GM12878 (cell line): ENCODE measurements at regions of chr6 and their contacts with region 1.

Region 1: DNA sequence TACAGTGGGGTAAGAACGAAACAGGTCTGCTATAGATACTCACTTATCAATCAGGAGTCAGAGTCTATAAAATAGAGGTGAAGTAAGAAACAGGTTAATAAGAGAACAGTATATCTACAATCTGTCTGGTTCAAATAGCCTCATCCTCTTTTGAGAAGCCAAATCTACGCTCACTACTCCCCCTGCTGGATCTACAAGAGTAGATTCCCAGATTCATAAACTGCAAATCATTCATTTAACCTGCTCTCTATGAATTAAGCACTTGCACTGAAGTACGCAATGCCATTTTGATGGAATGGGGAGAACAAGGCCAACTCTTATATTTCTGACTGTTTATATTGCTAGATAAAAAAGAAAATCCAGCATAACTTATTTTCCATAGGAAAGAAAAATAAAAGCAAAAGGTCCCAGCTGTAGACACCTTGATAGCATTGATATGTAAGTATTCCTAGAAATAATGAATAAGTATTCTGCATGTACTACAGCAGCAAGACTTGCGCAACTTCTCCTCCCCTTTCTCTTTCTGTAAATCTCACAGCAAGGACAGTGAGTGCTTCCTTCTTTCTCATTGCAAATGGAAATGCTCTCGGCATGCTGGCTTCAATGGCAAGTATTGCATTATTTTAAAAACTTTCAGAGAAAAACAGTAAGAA is 92.3 kb downstream of the RFX6 start:
- DNase-seq: no peak
- ATAC-seq: peak; percentile 92
- H3K4me3 ChIP-seq: no peak overlapping the region
- H3K27ac ChIP-seq: no peak overlapping the region
- H3K4me1 ChIP-seq: no peaks in the 10 kb centered on the region
- H3K27me3 ChIP-seq: no peaks in the 10 kb centered on the region
- CTCF ChIP-seq: peak; percentile 69 to 74 (median 70)
- EP300 ChIP-seq: no peak
- POLR2A ChIP-seq: no peak
- RAD21 ChIP-seq: peak; percentile 54; the same call in 1 of the 2 replicates

Region 2: DNA sequence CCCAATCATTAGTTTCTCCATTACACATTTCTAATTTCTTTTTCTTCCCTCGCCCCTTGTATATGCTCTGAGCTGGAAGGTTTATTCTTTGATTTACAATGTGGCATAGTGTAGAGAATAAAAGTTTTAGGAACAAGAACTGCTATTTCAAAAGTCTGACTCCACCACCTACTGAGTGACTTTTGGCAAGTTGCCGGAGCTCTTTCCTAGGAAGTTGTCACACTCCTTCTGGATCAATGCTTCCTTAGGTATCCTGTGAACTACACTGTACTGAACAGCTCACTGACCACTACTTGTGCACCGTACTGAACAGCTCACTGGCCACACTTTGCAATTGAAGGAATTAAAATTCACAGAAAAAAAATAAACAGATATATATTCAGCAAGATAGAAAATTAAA is 1366.9 kb before region 1 on chr6:
- CTCF ChIA-PET with region 1: no interaction called
- POLR2A ChIA-PET with region 1: no interaction called
- RAD21 ChIA-PET with region 1: no interaction called
- SMC1A ChIA-PET with region 1: no interaction called
- in situ Hi-C with region 1: no loop called
- intact Hi-C with region 1: no loop called
- DNase-seq: no peak
- ATAC-seq: no peak
- H3K4me3 ChIP-seq: no peak overlapping the region
- H3K27ac ChIP-seq: no peak overlapping the region
- H3K4me1 ChIP-seq: no peaks in the 10 kb centered on the region
- H3K27me3 ChIP-seq: no peaks in the 10 kb centered on the region
- CTCF ChIP-seq: no peak
- EP300 ChIP-seq: no peak
- POLR2A ChIP-seq: no peak
- RAD21 ChIP-seq: no peak

Region 3: GRCh38 chr6:116779573-116780164 is 189.7 kb before region 1 on chr6:
- CTCF ChIA-PET with region 1: interaction called, 27 read pairs
- POLR2A ChIA-PET with region 1: no interaction called
- RAD21 ChIA-PET with region 1: interaction called, 10 read pairs
- SMC1A ChIA-PET with region 1: interaction called, 12 read pairs
- in situ Hi-C with region 1: loop called (anchors 10 kb)
- intact Hi-C with region 1: loop called (anchors 1 kb)
- DNase-seq: no peak
- ATAC-seq: peak; percentile 82
- H3K4me3 ChIP-seq: no peak overlapping the region
- H3K27ac ChIP-seq: no peak overlapping the region
- H3K4me1 ChIP-seq: no peaks in the 10 kb centered on the region
- H3K27me3 ChIP-seq: no peaks in the 10 kb centered on the region
- CTCF ChIP-seq: peak; percentile 23 to 56 (median 37); a peak in 3 of 6 replicates
- EP300 ChIP-seq: no peak
- POLR2A ChIP-seq: no peak
- RAD21 ChIP-seq: peak; percentile 40; the same call in 1 of the 2 replicates

Region 4: GRCh38 chr6:116881236-116881635 is 88.1 kb before region 1 on chr6:
- CTCF ChIA-PET with region 1: interaction called, 15 read pairs
- POLR2A ChIA-PET with region 1: no interaction called
- RAD21 ChIA-PET with region 1: interaction called, 18 read pairs
- SMC1A ChIA-PET with region 1: interaction called, 14 read pairs
- in situ Hi-C with region 1: no loop called
- intact Hi-C with region 1: loop called (anchors 5 kb)
- DNase-seq: no peak
- ATAC-seq: no peak
- H3K4me3 ChIP-seq: no peak overlapping the region
- H3K27ac ChIP-seq: no peak overlapping the region
- H3K4me1 ChIP-seq: no peaks in the 10 kb centered on the region
- H3K27me3 ChIP-seq: peaks cover under 1 to 5% of the 10 kb centered on the region in 2 experiments
- CTCF ChIP-seq: no peak
- EP300 ChIP-seq: no peak
- POLR2A ChIP-seq: no peak
- RAD21 ChIP-seq: no peak

Region 5: DNA sequence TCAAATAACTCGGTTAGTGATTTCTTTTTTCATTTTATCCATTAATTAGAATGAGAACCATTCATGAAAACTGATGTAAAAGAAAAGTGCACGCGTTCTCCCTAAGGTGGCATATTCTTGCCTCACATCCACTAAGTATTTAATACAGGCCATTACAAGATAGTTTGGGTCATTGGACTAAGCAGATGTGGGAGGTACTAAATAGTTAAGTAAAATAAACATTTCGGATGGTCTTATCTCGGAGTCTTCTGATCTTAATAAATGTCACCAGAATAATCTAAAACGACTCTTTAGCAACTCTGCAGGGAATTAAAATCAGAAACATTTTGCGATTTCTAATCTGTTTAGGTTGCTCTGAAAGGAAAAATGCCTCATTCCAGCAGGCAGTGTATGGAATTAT is 13.6 kb before region 1 on chr6:
- CTCF ChIA-PET with region 1: interaction called, 7 read pairs
- POLR2A ChIA-PET with region 1: no interaction called
- RAD21 ChIA-PET with region 1: interaction called, 5 read pairs
- SMC1A ChIA-PET with region 1: interaction called, 18 read pairs
- in situ Hi-C with region 1: no loop called
- intact Hi-C with region 1: no loop called
- DNase-seq: no peak
- ATAC-seq: no peak
- H3K4me3 ChIP-seq: no peak overlapping the region
- H3K27ac ChIP-seq: no peak overlapping the region
- H3K4me1 ChIP-seq: no peaks in the 10 kb centered on the region
- H3K27me3 ChIP-seq: no peaks in the 10 kb centered on the region
- CTCF ChIP-seq: no peak
- EP300 ChIP-seq: no peak
- POLR2A ChIP-seq: no peak
- RAD21 ChIP-seq: no peak

Region 6: DNA sequence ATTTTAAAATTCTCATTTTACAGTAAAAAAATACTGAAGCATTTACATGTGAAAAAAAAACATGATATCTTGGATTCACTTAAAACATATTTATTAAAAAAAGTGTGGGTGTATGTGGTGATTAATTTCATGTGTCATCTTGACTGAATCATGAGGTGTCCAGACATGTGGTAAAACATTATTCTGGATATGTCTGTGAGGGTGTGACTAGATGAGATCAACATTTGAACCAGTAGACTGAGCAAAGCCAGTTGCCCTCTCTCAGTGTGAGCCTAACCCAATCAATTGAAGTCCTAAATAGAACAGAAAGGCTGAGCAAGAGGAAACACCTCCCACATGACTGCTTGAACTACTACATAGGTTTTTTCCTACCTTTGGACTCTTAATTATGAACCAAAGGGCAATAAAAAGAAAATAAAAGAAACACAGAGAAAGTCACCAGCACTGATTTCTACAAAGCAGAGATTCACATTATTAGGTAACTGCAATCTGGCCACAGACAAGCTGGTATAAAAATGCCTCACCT is 205.6 kb after region 1 on chr6:
- CTCF ChIA-PET with region 1: no interaction called
- POLR2A ChIA-PET with region 1: no interaction called
- RAD21 ChIA-PET with region 1: no interaction called
- SMC1A ChIA-PET with region 1: no interaction called
- in situ Hi-C with region 1: no loop called
- intact Hi-C with region 1: no loop called
- DNase-seq: no peak
- ATAC-seq: no peak
- H3K4me3 ChIP-seq: no peak overlapping the region
- H3K27ac ChIP-seq: no peak overlapping the region
- H3K4me1 ChIP-seq: no peaks in the 10 kb centered on the region
- H3K27me3 ChIP-seq: no peaks in the 10 kb centered on the region
- CTCF ChIP-seq: no peak
- EP300 ChIP-seq: no peak
- POLR2A ChIP-seq: no peak
- RAD21 ChIP-seq: no peak

Region 7: GRCh38 chr6:117188627-117189201 is 219.4 kb after region 1 on chr6:
- CTCF ChIA-PET with region 1: interaction called, 5 read pairs
- POLR2A ChIA-PET with region 1: no interaction called
- RAD21 ChIA-PET with region 1: no interaction called
- SMC1A ChIA-PET with region 1: no interaction called
- in situ Hi-C with region 1: no loop called
- intact Hi-C with region 1: loop called (anchors 2 kb)
- DNase-seq: no peak
- ATAC-seq: 0 out of 3 replicates have a peak, but pooled peaks have one; percentile 22
- H3K4me3 ChIP-seq: no peak overlapping the region
- H3K27ac ChIP-seq: no peak overlapping the region
- H3K4me1 ChIP-seq: no peaks in the 10 kb centered on the region
- H3K27me3 ChIP-seq: no peaks in the 10 kb centered on the region
- CTCF ChIP-seq: peak; percentile 28 to 44 (median 31); a peak in 5 of 6 replicates
- EP300 ChIP-seq: no peak
- POLR2A ChIP-seq: no peak
- RAD21 ChIP-seq: peak; percentile 37

Region 8: GRCh38 chr6:117317261-117317660 is 347.9 kb after region 1 on chr6:
- CTCF ChIA-PET with region 1: interaction called, 3 read pairs
- POLR2A ChIA-PET with region 1: no interaction called
- RAD21 ChIA-PET with region 1: no interaction called
- SMC1A ChIA-PET with region 1: interaction called, 3 read pairs
- in situ Hi-C with region 1: loop called (anchors 10 kb)
- intact Hi-C with region 1: loop called (anchors 2 kb)
- DNase-seq: no peak
- ATAC-seq: peak; percentile 58; the same call in 2 of the 3 replicates
- H3K4me3 ChIP-seq: no peak overlapping the region
- H3K27ac ChIP-seq: no peak overlapping the region
- H3K4me1 ChIP-seq: no peaks in the 10 kb centered on the region
- H3K27me3 ChIP-seq: no peaks in the 10 kb centered on the region
- CTCF ChIP-seq: peak; percentile 25 to 40 (median 36); a peak in 2 of 6 replicates
- EP300 ChIP-seq: no peak
- POLR2A ChIP-seq: no peak
- RAD21 ChIP-seq: peak; percentile 60